ENCODE measurements at regions of chr6 and their contacts with region 1.

Region 1: DNA sequence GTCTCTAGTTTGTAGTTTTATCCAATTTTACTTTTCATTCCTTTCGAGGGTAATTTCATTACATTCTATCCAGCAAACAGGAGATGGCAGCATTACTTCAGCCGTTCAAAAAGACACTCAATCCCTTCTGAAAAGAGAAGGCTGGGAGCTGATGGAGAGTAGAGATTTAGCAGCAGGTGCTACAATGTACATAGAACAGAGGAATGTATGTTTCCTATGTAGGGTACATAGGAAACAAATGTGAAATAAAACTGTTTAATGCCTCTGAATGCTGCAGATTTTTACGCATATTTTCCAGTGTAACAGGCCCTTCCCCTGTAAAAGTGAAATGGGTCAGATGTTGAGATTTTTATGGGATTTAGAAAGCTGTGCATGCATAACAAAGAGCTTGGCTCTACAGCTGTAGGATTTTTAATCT is 16.0 kb downstream of the RPS12 start:
- DNase-seq: no peak
- H3K4me3 ChIP-seq: no peak overlapping the region
- H3K27ac ChIP-seq: no peak overlapping the region
- H3K4me1 ChIP-seq: no peaks in the 10 kb centered on the region
- H3K27me3 ChIP-seq: no peaks in the 10 kb centered on the region
- CTCF ChIP-seq: peak in 2 of 3 experiments; percentile 55 to 61; a peak in 3 of 4 replicates
- EP300 ChIP-seq: no peak
- POLR2A ChIP-seq: no peak
- RAD21 ChIP-seq: peak; percentile 92 to 93

Region 2: DNA sequence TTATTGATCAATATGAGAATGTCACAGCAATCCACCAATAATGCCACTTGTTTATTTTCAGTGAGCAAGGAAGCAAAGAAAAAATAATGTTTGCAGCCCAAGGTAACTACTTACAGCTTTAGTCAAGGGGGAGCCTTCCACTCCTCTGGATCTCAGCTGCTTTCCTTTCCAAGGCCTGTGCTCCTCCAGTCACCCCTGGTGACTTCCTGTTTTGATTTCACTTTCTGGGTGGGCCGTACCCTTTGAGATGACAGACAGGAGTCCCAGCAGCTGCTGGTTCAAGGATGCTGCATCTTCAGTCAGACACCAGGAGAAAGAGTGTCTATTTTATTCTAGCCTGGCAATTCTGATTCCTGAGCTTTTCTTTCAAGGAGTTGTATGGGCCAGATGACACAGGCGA is 67.1 kb before region 1 on chr6:
- CTCF ChIA-PET with region 1: no interaction called
- POLR2A ChIA-PET with region 1: no interaction called
- DNase-seq: no peak
- H3K4me3 ChIP-seq: no peak overlapping the region
- H3K27ac ChIP-seq: no peak overlapping the region
- H3K4me1 ChIP-seq: no peaks in the 10 kb centered on the region
- H3K27me3 ChIP-seq: no peaks in the 10 kb centered on the region
- CTCF ChIP-seq: no peak
- EP300 ChIP-seq: no peak
- POLR2A ChIP-seq: no peak
- RAD21 ChIP-seq: no peak

Region 3: DNA sequence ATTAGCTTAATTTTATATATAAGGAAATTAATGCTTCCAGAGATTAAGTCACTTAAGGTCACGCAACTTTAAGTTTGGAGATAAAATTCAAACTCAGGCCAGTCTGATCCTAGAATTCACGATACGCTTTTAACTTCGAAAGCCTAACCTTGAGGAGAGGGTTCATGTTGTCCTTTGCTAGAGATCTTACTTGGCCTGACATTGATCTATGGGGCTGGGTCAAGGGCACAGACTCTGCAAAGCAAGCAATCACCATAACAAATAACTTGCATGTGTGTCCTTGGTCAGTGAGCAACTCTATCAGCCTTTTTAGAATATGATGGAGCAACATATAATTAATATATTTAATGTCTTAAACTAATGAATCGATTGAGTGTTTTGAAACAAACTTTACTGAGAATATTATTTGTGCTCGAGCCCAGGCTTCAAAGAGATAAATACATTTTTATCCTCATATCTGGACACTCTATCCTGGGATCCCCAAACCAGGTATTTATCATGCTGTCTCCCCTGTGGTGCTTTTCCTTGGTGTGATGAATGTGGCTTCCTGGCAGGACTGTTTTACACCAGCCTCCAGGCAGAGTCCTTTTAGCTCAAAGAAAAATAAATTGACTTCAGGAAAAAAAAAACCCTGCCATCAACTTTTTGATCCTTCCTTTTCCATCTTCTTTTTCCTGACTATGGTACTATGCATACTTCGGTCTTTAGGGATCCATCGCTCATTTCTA is 13.1 kb after region 1 on chr6:
- CTCF ChIA-PET with region 1: interaction called, 17 read pairs
- POLR2A ChIA-PET with region 1: no interaction called
- DNase-seq: no peak
- H3K4me3 ChIP-seq: no peak overlapping the region
- H3K27ac ChIP-seq: no peak overlapping the region
- H3K4me1 ChIP-seq: peaks cover 0 to 2% (median 0%) of the 10 kb centered on the region in 4 experiments; a peak in 2 of 7 replicates
- H3K27me3 ChIP-seq: no peaks in the 10 kb centered on the region
- CTCF ChIP-seq: no peak
- EP300 ChIP-seq: no peak
- POLR2A ChIP-seq: no peak
- RAD21 ChIP-seq: no peak

Region 4: GRCh38 chr6:132902901-132903300 is 72.6 kb after region 1 on chr6:
- CTCF ChIA-PET with region 1: no interaction called
- POLR2A ChIA-PET with region 1: no interaction called
- DNase-seq: no peak
- H3K4me3 ChIP-seq: no peak overlapping the region
- H3K27ac ChIP-seq: no peak overlapping the region
- H3K4me1 ChIP-seq: peaks cover 0 to 4% (median 1%) of the 10 kb centered on the region in 4 experiments; a peak in 1 of 7 replicates
- H3K27me3 ChIP-seq: no peaks in the 10 kb centered on the region
- CTCF ChIP-seq: no peak
- EP300 ChIP-seq: no peak
- POLR2A ChIP-seq: no peak
- RAD21 ChIP-seq: no peak

Region 5: DNA sequence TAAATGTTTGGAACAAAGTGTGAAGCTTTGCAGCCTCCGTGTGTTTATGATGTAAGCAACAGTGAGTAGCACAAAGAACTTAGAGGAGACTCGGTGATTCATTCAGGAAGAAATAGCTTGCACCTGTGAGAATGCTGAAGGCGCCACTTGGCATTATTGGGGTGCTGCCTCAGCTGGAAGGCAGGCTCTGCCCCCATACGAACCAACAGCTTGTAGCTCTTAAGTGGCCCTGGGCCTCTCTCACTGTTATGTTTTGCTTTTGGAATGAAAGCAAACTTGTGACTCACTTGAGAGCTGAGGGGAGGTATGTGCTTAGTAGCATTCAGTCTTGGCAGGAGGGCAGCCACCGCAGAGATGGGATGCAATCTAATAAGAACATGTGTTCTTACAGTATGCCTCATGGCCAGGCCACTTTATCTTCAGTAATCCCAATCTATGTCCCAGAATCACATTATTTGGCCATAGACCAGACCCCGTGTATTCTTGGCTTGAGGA is 721.6 kb after region 1 on chr6:
- CTCF ChIA-PET with region 1: interaction called, 10 read pairs
- POLR2A ChIA-PET with region 1: no interaction called
- DNase-seq: no peak
- H3K4me3 ChIP-seq: no peak overlapping the region
- H3K27ac ChIP-seq: no peak overlapping the region
- H3K4me1 ChIP-seq: peaks cover 7 to 17% (median 12%) of the 10 kb centered on the region in 4 experiments
- H3K27me3 ChIP-seq: no peaks in the 10 kb centered on the region
- CTCF ChIP-seq: no peak
- EP300 ChIP-seq: no peak
- POLR2A ChIP-seq: no peak
- RAD21 ChIP-seq: no peak

Measured in H1 (cell line).